ENCODE measurements at regions of chrX and their contacts with region 1.

Region 1: DNA sequence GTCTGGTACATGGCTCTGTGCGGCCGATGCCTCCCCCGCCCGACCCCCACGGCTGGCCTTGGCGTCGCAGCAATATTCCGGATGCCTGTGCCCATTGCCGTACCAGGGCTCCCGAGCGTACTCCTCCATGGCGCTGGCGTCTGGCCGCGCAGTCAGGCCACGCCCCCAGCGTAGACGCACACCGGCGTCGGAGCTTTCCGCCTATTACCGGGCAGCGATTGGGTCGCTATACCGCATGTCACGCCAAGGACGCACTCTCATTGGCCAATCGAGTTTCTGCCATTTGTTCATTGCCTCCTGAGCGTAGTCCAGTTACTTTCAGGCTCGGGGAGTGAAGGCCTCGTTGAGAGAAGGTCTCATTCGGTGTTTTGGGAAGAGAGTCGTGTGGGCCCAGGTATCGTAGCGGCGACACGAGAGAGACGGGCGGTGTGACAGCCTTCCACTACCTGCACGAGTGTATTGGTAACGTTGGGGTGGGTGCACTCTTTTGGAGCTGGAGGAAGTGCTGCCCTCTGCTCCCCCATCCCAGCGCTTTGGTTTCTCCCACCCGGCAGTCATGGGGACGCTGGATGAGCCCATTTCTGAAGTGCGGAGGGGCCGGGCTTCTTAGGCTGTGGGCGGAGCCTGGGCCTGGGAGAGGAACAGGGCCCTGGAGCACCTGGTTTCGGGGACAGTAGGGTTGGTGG is at the starts of genes PQBP1 and TIMM17B:
- DNase-seq: peak; percentile 84

Region 2: DNA sequence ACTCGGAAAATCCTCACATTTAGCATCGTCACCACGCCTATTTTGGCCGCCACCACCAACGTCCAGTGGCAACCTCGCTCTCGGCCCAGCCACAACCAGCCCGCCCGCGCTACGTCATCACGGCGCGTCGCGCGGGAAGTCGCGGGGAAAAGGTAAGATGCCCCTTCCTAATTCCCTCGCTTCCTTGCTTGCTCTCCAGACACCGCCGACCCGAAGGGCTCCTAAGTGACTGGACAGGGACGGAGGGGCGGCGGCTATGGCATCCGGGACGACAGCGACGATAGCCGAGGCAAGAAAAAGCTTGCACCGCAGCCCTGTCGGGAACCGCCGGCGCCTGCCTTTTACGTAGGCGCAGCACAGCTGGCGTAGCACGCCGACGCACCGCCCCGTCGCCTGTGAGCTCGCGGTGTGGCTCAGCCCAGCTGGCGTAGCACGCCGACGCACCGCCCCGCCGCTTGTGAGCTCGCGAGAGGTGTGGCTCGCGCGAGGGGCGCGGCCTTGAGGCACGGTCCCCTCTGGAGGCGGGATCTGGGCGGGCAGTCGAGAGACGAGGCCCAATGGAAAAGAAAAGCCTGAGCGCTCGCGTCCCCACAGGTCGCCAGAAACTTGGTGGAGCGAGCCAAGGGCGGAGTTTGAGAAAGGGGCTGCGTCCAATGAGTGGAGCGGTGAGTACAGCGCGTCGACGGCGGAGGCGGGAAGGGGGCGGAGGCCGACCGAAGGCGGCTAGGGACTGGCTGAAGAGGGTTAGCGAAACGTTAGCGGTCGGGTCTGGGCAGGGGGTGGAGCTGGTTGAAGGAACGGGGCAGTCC is 96.3 kb before region 1 on chrX and contains the start of gene HDAC6:
- CTCF ChIA-PET with region 1: no interaction called
- POLR2A ChIA-PET with region 1: interaction called, 10 read pairs
- DNase-seq: peak; percentile 89

Region 3: GRCh38 chrX:48911412-48912182 is 13.8 kb after region 1 on chrX and contains the start of gene SLC35A2:
- CTCF ChIA-PET with region 1: no interaction called
- POLR2A ChIA-PET with region 1: interaction called, 26 read pairs
- DNase-seq: peak; percentile 75

Region 4: DNA sequence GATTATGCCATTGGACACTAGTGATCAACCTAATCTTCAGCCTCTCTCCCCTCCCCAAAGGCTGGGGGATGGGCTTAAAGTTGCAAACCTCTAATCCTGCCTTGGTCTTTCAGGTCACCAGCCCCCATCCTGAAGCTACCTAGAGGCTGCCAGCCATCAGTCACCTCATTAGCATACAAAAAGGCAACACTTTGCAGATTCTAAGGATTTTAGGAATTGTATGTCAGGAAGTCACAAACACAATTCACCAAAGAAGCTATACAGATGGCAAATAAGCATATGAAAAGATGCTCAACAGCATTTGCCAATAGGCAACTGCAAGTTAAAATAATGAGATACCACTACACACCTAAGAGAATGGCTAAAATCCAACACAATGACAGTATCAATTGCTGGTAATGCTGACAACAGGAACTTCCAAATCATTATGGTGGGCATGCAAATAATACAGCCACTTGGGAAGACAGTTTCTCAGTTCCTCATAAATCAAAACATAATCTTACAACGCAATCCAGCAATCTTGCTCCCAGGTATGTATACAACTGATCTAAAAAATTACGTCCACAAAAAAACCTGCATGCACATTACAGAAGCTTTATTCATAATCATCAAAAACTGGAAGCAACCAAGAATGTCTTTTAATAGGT is 30.1 kb after region 1 on chrX:
- CTCF ChIA-PET with region 1: no interaction called
- POLR2A ChIA-PET with region 1: no interaction called
- DNase-seq: no peak

Measured in HEK293T (cell line).